OCI-LY7 (cell line): ENCODE measurements at regions of chr1 and their contacts with region 1.

Region 1: DNA sequence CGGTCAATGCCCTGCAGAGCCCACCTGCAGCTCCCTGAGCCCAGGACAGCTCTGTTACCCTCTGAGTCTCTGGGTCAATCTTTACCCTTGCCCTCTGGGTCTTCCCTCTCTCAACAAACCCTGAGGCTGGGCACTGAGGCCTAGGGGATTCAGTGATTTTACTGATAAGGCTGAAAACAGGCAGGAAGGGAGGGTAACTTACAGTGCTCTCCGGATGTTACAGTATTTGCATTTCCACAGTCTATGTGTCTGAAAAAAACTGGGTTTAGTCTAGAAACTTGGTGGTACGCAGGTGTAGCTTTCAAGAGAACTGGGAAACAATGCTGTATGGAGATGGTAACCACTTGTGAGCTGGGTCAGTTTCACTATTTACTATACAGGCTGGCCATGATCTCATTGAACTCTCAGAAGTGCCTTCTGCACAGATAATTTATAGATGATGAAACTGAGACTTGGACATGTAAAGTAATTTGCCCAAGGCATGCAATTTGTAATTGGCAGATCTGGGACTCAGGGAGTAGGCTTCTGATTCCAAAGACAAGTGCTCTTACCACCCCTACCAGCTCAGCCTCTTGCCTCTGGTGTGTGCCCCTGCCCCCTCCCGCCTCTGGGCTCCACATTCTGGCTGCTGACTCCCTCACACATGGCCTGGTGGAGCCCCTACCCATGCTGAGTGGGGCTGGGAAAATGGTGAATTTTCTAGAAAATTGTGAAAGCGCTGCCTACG is 48.8 kb downstream of the TENT5C start:
- DNase-seq: peak; percentile 95
- H3K4me3 ChIP-seq: peak overlapping the region; percentile 48
- H3K27ac ChIP-seq: peak overlapping the region; percentile 98
- H3K4me1 ChIP-seq: peaks cover 99% of the 10 kb centered on the region
- CTCF ChIP-seq: no peak

Region 2: DNA sequence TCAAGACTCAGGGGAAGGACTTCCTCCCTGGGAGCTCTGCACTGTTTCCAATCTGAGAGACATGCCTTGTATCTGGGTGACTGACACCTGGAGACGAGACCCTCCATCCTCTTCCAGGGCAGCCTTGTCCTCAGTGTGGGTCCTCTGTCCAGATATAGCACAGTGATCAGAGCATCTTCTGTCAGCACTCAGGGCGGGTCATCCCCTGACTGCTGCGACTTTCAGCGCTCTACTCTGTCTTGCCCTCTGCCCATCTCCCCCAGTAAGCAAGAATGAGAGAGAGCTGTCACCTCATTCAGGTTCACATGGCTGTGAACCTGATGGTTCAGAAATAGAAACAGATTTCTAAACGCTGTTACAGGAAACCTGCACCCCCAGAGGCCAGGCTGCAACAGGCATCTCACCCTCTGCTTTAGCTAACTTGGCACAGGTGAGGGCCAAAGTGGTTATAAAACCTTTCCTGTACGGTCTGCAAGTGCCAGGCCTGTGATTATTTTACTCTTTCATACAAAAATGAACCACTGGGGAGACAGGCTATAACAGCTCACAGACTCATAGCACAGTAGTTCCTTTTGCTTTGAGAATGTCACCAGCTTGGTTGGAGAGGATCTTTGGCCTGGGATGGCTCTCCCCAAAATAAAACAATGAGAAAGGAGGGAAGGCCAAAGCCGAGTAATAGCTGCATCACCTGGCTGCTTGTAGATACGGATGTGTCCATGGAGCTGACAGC is 60.2 kb before region 1 on chr1:
- CTCF ChIA-PET with region 1: interaction called, 3 read pairs
- POLR2A ChIA-PET with region 1: interaction called, 13 read pairs
- intact Hi-C with region 1: no loop called
- DNase-seq: peak; percentile 67
- H3K4me3 ChIP-seq: no peak overlapping the region
- H3K27ac ChIP-seq: peak overlapping the region; percentile 14
- H3K4me1 ChIP-seq: peaks cover 30% of the 10 kb centered on the region
- CTCF ChIP-seq: peak; percentile 67

Region 3: GRCh38 chr1:117612517-117613248 is 42.0 kb before region 1 on chr1:
- CTCF ChIA-PET with region 1: interaction called, 3 read pairs
- POLR2A ChIA-PET with region 1: interaction called, 13 read pairs
- intact Hi-C with region 1: no loop called
- DNase-seq: no peak
- H3K4me3 ChIP-seq: no peak overlapping the region
- H3K27ac ChIP-seq: no peak overlapping the region
- H3K4me1 ChIP-seq: peaks cover 79% of the 10 kb centered on the region
- CTCF ChIP-seq: no peak

Region 4: GRCh38 chr1:117632269-117633067 is 22.2 kb before region 1 on chr1:
- CTCF ChIA-PET with region 1: interaction called, 16 read pairs
- POLR2A ChIA-PET with region 1: interaction called, 760 read pairs
- intact Hi-C with region 1: loop called (anchors 1 kb)
- DNase-seq: peak; percentile 83
- H3K4me3 ChIP-seq: peak overlapping the region; percentile 56
- H3K27ac ChIP-seq: peak overlapping the region; percentile 85
- H3K4me1 ChIP-seq: peaks cover 99% of the 10 kb centered on the region
- CTCF ChIP-seq: no peak

Region 5: GRCh38 chr1:117638759-117639158 is 15.9 kb before region 1 on chr1:
- CTCF ChIA-PET with region 1: interaction called, 12 read pairs
- POLR2A ChIA-PET with region 1: interaction called, 760 read pairs
- intact Hi-C with region 1: loop called (anchors 1 kb)
- DNase-seq: peak; percentile 83
- H3K4me3 ChIP-seq: peak overlapping the region; percentile 26
- H3K27ac ChIP-seq: peak overlapping the region; percentile 70
- H3K4me1 ChIP-seq: peaks cover 100% of the 10 kb centered on the region
- CTCF ChIP-seq: no peak